CD8-positive, alpha-beta T cell (primary cell): ENCODE measurements at regions of chr18 and their contacts with region 1.

Region 1: DNA sequence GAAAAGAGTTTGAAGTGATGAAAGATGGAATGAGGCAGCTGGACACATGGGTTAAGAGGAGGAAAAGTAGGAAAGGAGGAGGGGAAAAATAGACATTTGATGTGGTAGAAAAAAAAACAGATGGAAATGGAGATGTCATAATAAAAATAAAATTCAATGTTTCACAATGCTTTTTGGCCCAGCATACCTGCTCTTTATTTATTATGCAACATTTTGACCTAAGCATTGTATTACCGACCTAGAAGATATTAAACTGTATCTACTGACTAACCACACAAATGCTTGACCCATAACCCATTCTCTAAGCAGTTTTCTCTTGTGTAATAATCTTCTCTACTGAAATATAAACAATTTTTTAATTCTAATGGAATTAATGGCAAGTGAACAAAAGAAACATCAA is 362.4 kb downstream of the FBXO15 start:
- DNase-seq: no peak
- ATAC-seq: no peak
- H3K4me3 ChIP-seq: no peak overlapping the region
- H3K4me3 Mint-ChIP-seq: no peak overlapping the region
- H3K27ac ChIP-seq: no peak overlapping the region
- H3K27ac Mint-ChIP-seq: no peak overlapping the region
- H3K4me1 ChIP-seq: no peaks in the 10 kb centered on the region
- H3K4me1 Mint-ChIP-seq: no peaks in the 10 kb centered on the region
- H3K27me3 ChIP-seq: no peaks in the 10 kb centered on the region
- H3K27me3 Mint-ChIP-seq: no peaks in the 10 kb centered on the region
- CTCF ChIP-seq: no peak

Region 2: GRCh38 chr18:73549236-73549635 is 236.0 kb before region 1 on chr18:
- CTCF ChIA-PET with region 1: no interaction called
- POLR2A ChIA-PET with region 1: no interaction called
- intact Hi-C with region 1: no loop called
- DNase-seq: no peak
- ATAC-seq: no peak
- H3K4me3 ChIP-seq: no peak overlapping the region
- H3K4me3 Mint-ChIP-seq: no peak overlapping the region
- H3K27ac ChIP-seq: no peak overlapping the region
- H3K27ac Mint-ChIP-seq: no peak overlapping the region
- H3K4me1 ChIP-seq: no peaks in the 10 kb centered on the region
- H3K4me1 Mint-ChIP-seq: no peaks in the 10 kb centered on the region
- H3K27me3 ChIP-seq: no peaks in the 10 kb centered on the region
- H3K27me3 Mint-ChIP-seq: no peaks in the 10 kb centered on the region
- CTCF ChIP-seq: no peak

Region 3: GRCh38 chr18:73724958-73725357 is 60.3 kb before region 1 on chr18:
- CTCF ChIA-PET with region 1: no interaction called
- POLR2A ChIA-PET with region 1: no interaction called
- intact Hi-C with region 1: loop called in 1 of 2 experiments (anchors 10 kb)
- DNase-seq: no peak
- ATAC-seq: no peak
- H3K4me3 ChIP-seq: no peak overlapping the region
- H3K4me3 Mint-ChIP-seq: no peak overlapping the region
- H3K27ac ChIP-seq: no peak overlapping the region
- H3K27ac Mint-ChIP-seq: no peak overlapping the region
- H3K4me1 ChIP-seq: no peaks in the 10 kb centered on the region
- H3K4me1 Mint-ChIP-seq: no peaks in the 10 kb centered on the region
- H3K27me3 ChIP-seq: no peaks in the 10 kb centered on the region
- H3K27me3 Mint-ChIP-seq: no peaks in the 10 kb centered on the region
- CTCF ChIP-seq: no peak